GM10248 (cell line): ENCODE measurements at regions of chr10 and their contacts with region 1.

Region 1: DNA sequence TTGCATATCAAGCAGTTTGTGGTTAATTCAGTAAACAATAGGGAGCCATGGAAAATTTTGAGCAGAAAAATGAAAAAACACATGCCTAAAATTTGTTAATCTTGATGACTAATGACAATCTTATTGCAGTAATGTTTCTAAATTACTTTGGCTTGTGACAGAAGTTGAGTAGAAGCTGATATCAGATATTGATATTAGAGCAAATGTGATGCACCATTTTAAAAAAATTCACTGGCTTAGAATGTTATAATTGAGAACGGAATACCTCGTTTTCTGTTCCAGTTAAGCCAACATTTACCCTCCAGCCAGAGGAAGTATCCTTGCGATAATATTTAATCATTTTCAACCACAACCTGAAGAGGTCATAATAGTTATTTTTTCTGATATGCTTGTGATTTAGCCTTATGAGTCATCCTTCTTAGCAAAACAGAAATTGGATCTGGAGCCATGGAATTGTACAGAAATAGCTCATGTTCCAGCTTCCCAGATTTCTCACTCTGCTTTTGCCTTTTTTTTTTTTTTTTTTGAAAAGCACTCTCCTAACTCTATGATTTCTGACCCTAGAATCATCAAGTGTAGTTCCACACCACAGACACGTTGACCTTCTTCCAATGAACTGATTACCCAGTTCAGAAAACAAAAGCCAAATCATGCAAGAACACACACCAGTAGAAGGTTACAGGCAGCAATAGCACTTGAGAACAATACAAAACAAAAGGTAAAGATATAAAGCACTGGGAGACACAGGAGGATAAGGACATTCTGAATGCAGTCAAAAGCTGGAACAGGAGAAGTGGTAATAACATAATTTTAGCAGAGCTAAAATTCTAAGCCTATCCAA is 96.8 kb upstream of the PHYHIPL start:
- DNase-seq: no peak
- CTCF ChIP-seq: no peak

Region 2: GRCh38 chr10:58115218-58116052 is 964.2 kb before region 1 on chr10:
- CTCF ChIA-PET with region 1: no interaction called
- POLR2A ChIA-PET with region 1: no interaction called
- DNase-seq: no peak
- CTCF ChIP-seq: no peak

Region 3: DNA sequence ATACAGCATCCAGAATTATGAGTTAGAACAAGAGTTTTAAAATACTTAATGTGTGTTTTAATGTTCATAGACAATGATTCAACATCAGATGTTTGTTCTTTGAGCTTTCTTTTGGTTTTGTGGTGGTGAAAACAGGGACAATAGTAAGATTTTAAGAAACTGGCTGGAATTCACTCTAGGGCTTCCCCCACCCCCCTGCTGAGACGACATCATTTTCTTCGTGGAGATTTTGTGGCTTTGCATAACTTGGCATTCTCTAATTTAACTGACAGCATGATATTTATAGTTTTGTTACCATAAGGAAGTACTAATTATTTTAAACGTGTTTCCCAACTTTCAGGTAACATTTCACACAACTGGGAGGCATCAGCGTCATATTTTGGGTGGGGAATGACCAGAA is 382.9 kb before region 1 on chr10:
- CTCF ChIA-PET with region 1: no interaction called
- POLR2A ChIA-PET with region 1: no interaction called
- DNase-seq: no peak
- CTCF ChIP-seq: no peak

Region 4: GRCh38 chr10:59068581-59069191 is 10.9 kb before region 1 on chr10:
- CTCF ChIA-PET with region 1: interaction called, 15 read pairs
- POLR2A ChIA-PET with region 1: no interaction called
- DNase-seq: no peak
- CTCF ChIP-seq: no peak

Region 5: GRCh38 chr10:59090817-59091622 is 11.4 kb after region 1 on chr10:
- CTCF ChIA-PET with region 1: interaction called, 82 read pairs
- POLR2A ChIA-PET with region 1: no interaction called
- DNase-seq: no peak
- CTCF ChIP-seq: no peak

Region 6: DNA sequence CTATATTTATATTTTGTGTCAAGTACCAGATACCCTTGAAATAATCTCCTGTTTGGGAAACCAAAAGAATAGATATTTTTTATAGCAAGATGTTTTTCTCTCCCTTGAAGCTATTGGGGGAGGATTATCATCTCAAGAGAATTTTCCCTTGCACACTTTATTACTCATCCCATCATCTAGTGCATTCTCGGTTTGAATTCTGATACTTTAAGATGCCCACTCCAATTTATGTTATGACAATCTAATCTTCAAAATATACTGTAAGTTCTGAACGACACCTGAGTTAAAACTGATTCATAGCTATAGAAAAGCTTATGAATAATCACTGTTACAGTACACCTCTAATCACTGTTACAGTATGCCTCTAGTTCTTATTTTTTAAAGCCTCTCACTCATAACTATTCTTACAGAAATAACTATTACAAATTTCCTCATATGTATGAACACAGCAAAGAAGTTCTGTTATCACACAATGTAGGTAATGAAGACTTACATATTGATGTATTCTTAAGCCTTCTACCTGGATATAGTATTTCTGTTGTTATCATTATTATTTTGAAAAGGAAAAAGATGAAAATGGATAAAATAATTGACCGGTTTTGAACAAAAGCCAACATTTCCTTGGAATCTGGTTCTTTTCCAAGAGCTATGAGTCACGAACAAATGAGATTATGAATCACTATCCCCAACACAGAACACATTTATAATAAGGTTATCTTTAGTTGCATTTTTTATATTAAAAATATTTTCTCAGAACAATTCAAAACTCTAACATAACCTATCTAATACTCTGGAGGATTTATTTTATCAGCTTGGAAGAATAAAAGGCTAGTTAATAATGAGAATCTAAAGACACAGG is 355.1 kb after region 1 on chr10:
- CTCF ChIA-PET with region 1: no interaction called
- POLR2A ChIA-PET with region 1: no interaction called
- DNase-seq: no peak
- CTCF ChIP-seq: no peak

Region 7: DNA sequence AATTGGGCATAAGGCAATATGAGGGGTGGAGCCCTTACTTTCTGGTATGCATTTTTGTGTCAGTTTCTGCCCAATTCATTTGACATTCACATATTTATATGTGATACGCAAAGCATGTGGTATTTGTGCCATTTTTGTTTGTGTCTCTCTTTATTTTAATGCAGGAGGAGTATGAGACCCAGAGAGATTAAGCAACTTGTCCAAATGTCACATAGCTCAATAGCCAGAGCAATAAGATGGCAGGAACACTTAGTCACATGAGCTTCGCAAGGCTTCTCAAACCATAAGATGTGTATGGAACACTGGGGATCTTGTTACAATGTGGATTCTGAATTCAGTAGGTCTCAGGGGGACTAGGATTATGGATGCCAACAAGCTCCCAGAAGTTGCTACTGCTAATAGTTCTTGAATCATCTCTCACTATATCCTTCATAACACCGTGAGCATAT is 654.4 kb after region 1 on chr10:
- CTCF ChIA-PET with region 1: no interaction called
- POLR2A ChIA-PET with region 1: no interaction called
- DNase-seq: no peak
- CTCF ChIP-seq: no peak